CD4-positive, alpha-beta T cell (primary cell): ENCODE measurements at regions of chr11 and their contacts with region 1.

Region 1: DNA sequence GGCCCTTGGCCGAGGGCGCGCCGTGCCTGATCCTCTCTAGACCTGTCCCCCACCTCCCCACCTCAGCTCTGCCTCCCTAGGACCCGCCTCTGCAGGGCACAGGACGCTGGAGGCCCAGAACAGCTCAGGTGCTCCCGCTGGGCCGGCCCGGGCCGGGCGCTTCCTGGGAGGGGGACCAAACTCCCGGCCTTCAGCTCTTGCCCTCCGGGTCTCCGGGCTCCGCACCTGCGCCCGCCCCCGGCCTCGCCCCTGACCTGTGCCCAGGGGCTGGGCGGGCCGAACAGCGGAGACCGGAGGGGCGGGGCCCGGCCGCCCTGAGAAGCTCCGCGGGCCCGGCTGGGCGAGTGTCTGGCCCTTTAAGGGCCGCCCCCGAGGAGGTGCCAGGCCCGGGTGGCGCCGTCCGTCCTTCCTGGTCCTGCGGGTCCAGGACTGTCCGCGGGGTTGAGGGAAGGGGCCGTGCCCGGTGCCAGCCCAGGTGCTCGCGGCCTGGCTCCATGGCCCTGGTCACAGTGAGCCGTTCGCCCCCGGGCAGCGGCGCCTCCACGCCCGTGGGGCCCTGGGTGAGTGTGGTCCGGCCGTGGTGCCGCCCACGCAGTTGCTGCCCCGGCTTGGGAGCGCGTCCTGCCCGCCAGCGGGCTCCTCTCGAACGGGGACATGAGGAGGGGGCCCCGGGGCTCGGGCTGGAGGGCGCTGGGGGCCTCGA is at the start of gene SSH3:
- DNase-seq: peak in 8 of 14 experiments; percentile 30 to 66 (median 48)
- ATAC-seq: peak; percentile 62
- H3K4me3 ChIP-seq: peak within 1 kb of the TSS; percentile 62
- H3K4me3 Mint-ChIP-seq: peak within 1 kb of the TSS; percentile 65
- H3K27ac ChIP-seq: peak within 1 kb of the TSS in 1 of 2 donors; percentile 41
- H3K27ac Mint-ChIP-seq: no peak within 1 kb of the TSS
- H3K4me1 ChIP-seq: peaks cover 33% of the 10 kb centered on the region
- H3K4me1 Mint-ChIP-seq: peaks cover 5% of the 10 kb centered on the region
- H3K27me3 ChIP-seq: no peaks in the 10 kb centered on the region
- H3K27me3 Mint-ChIP-seq: no peaks in the 10 kb centered on the region
- CTCF ChIP-seq: no peak
- total RNA-seq, gene SSH3: 8.5 to 8.8 TPM

Region 2: DNA sequence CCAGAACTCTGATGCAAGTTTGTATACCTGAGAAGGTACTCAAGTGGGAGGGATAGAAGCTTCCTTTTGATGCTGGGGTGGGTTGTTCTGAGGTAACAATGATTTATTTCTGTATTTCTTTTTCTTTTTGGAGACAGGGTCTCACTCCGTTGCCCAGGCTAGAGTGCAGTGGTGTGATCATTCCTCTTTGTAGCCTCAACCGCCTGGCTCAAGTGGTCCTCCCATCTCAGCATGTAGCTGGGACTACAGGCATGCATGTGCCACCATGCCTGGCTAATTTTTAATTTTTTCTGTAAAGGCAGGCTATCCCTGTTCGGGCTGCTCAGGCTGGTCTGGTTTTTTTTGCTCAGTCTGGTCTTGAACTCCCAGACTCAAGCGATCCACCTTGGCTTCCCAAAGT is 176.3 kb before region 1 on chr11:
- CTCF ChIA-PET with region 1: no interaction called
- POLR2A ChIA-PET with region 1: no interaction called
- intact Hi-C with region 1: no loop called
- DNase-seq: no peak
- ATAC-seq: no peak
- H3K4me3 ChIP-seq: no peak overlapping the region
- H3K4me3 Mint-ChIP-seq: no peak overlapping the region
- H3K27ac ChIP-seq: no peak overlapping the region
- H3K27ac Mint-ChIP-seq: no peak overlapping the region
- H3K4me1 ChIP-seq: peaks cover 18% of the 10 kb centered on the region
- H3K4me1 Mint-ChIP-seq: peaks cover 30% of the 10 kb centered on the region
- H3K27me3 ChIP-seq: no peaks in the 10 kb centered on the region
- H3K27me3 Mint-ChIP-seq: no peaks in the 10 kb centered on the region
- CTCF ChIP-seq: no peak

Region 3: DNA sequence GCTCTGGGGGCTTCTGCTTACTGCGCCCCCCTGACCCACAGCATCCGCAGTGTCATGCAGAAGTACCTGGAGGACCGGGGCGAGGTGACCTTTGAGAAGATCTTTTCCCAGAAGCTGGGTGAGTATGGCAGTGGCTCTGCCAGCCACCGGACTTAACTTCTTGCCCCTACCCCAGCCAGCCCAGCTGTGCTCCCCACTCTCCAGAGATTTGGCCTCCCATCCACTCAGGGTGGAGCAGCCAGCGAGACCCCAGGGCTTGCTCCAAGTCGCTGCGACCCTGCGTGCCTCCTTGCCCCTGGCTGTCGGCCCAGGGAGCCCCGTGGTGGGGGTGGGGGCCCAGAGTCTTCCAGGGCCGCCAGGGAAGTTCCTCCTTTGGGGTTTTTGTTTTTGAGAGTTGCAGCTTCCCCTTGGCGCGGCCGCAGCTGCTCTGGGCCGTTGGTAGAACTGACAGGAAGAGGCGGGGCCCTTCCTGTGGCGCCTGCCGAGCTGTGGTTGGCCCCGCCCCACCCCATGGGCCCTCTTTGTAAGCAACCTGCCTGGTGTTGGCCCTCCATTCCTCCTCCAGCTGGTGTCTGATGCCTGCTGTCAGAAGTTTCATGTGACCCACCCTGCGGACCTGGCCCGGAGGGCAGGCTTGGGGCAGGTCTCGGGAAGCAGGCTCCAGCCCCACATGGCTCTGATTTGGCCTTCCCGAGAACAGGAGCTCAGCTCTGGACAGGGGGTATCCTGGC is 25.9 kb before region 1 on chr11:
- CTCF ChIA-PET with region 1: no interaction called
- POLR2A ChIA-PET with region 1: interaction called, 21 read pairs
- intact Hi-C with region 1: no loop called
- DNase-seq: peak; percentile 81 to 98 (median 93)
- ATAC-seq: peak; percentile 93
- H3K4me3 ChIP-seq: peak overlapping the region; percentile 43
- H3K4me3 Mint-ChIP-seq: peak overlapping the region; percentile 91
- H3K27ac ChIP-seq: peak overlapping the region; percentile 76 to 97
- H3K27ac Mint-ChIP-seq: peak overlapping the region; percentile 90
- H3K4me1 ChIP-seq: peaks cover 100% of the 10 kb centered on the region
- H3K4me1 Mint-ChIP-seq: peaks cover 64% of the 10 kb centered on the region
- H3K27me3 ChIP-seq: no peaks in the 10 kb centered on the region
- H3K27me3 Mint-ChIP-seq: no peaks in the 10 kb centered on the region
- CTCF ChIP-seq: no peak